KBM-7 (cell line): ENCODE measurements at regions of chr12 and their contacts with region 1.

Region 1: DNA sequence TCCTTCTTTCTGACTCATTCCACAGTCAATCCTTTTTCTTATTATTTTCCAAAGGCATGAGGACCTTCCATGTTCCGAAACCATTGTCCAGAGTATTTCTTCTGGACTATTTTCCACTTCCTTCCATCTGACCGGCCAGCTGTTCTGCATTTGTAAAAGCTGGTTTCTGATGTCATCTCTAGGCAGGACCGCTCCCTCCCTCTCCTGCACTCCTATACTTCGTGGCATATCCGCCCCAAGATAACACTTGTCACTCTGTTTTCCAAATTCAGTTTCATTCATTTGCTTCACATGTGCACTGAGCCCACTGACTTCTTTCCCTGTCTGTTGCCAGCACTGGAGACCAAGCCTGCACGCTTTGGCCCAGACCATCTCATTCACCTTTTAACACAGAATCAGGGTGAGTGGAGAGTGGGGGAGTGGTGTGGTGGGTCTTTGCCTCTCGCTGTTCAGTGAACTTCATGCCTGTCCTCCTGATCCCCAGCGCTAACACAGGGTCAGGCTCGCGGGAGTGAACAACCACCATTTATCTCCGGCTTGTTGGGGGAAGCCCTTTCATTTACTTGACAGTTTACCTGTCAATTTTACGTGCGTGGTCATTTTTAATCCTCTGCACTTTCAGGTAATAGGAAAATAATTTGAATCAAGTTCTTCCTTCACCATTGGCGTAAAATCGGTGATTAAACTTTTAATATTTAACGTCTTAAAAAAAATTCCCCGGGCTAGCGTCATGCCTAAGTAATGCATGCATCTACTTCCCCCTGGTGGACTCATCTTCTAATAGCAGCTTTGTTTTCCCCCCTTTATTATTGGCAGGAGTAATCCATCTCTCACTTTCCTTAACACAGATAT is 52.5 kb downstream of the C12orf75 start:
- DNase-seq: peak; percentile 73

Region 2: GRCh38 chr12:104177663-104178501 is 1205.1 kb before region 1 on chr12:
- in situ Hi-C with region 1: loop called (anchors 25 kb)
- DNase-seq: peak; percentile 89

Region 3: GRCh38 chr12:105504286-105504685 is 121.3 kb after region 1 on chr12:
- in situ Hi-C with region 1: no loop called
- DNase-seq: no peak